CD4-positive, alpha-beta memory T cell (primary cell): ENCODE measurements at regions of chr4 and their contacts with region 1.

Region 1: GRCh38 chr4:103091601-103092223 is 7.9 kb downstream of the BDH2 start:
- DNase-seq: peak; percentile 51 to 66 (median 59)
- H3K4me3 ChIP-seq: no peak overlapping the region
- H3K4me3 Mint-ChIP-seq: no peak overlapping the region
- H3K27ac ChIP-seq: no peak overlapping the region
- H3K27ac Mint-ChIP-seq: peak overlapping the region in 3 of 7 donors; percentile 37 to 73 (median 60)
- H3K4me1 ChIP-seq: peaks cover 12% of the 10 kb centered on the region
- H3K4me1 Mint-ChIP-seq: peaks cover 6 to 20% (median 10%) of the 10 kb centered on the region in 4 donors
- H3K27me3 ChIP-seq: no peaks in the 10 kb centered on the region
- H3K27me3 Mint-ChIP-seq: no peaks in the 10 kb centered on the region

Region 2: DNA sequence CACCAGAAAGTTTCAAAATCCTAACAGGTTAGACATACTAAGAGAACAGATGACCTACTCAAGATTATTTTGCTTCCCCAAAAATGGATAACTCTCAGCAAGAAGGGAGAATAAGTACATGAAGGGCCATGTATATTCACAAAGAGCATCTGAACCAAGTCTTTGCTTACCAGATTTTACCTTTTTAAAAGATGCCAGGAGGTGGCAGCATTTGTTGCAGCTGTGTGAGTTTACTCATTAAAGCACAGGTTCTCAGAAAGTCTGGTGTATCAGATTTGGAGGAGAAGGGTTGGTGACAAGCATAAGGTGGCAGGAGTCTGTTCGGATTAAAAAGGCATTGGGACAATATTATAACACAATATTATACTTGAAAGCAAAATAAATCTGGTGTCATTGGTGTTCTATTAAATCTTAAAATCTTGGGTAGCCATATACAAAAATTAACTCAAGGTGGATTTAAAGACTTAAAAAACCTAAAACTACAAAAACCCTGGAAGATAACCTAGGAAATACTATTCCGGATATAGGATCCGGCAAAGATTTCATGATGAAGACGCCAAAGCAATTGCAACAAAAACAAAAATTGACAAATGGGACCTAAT is 641.9 kb before region 1 on chr4:
- CTCF ChIA-PET with region 1: interaction called, 7 read pairs
- POLR2A ChIA-PET with region 1: no interaction called
- intact Hi-C with region 1: loop called (anchors 1 kb)
- DNase-seq: peak; percentile 67 to 75 (median 68)
- H3K4me3 ChIP-seq: no peak overlapping the region
- H3K4me3 Mint-ChIP-seq: no peak overlapping the region
- H3K27ac ChIP-seq: no peak overlapping the region
- H3K27ac Mint-ChIP-seq: no peak overlapping the region
- H3K4me1 ChIP-seq: peaks cover 12% of the 10 kb centered on the region
- H3K4me1 Mint-ChIP-seq: peaks cover 5 to 21% (median 9%) of the 10 kb centered on the region in 4 donors
- H3K27me3 ChIP-seq: no peaks in the 10 kb centered on the region
- H3K27me3 Mint-ChIP-seq: no peaks in the 10 kb centered on the region

Region 3: GRCh38 chr4:103046416-103047290 is 45.1 kb before region 1 on chr4:
- CTCF ChIA-PET with region 1: interaction called, 62 read pairs
- POLR2A ChIA-PET with region 1: no interaction called
- intact Hi-C with region 1: loop called (anchors 1 kb)
- DNase-seq: peak; percentile 44 to 59 (median 48)
- H3K4me3 ChIP-seq: no peak overlapping the region
- H3K4me3 Mint-ChIP-seq: no peak overlapping the region
- H3K27ac ChIP-seq: no peak overlapping the region
- H3K27ac Mint-ChIP-seq: peak overlapping the region in 1 of 7 donors; percentile 27
- H3K4me1 ChIP-seq: no peaks in the 10 kb centered on the region
- H3K4me1 Mint-ChIP-seq: peaks cover 0 to 7% (median 0%) of the 10 kb centered on the region in 4 donors
- H3K27me3 ChIP-seq: no peaks in the 10 kb centered on the region
- H3K27me3 Mint-ChIP-seq: no peaks in the 10 kb centered on the region

Region 4: GRCh38 chr4:103075901-103076739 is 15.6 kb before region 1 on chr4:
- CTCF ChIA-PET with region 1: interaction called, 38 read pairs
- POLR2A ChIA-PET with region 1: interaction called, 6 read pairs
- intact Hi-C with region 1: loop called (anchors 1 kb)
- DNase-seq: peak; percentile 72 to 79 (median 76)
- H3K4me3 ChIP-seq: peak overlapping the region; percentile 26 to 72
- H3K4me3 Mint-ChIP-seq: peak overlapping the region; percentile 94 to 98 (median 98)
- H3K27ac ChIP-seq: peak overlapping the region; percentile 78
- H3K27ac Mint-ChIP-seq: peak overlapping the region; percentile 98 to 99 (median 99)
- H3K4me1 ChIP-seq: peaks cover 37% of the 10 kb centered on the region
- H3K4me1 Mint-ChIP-seq: peaks cover 24 to 58% (median 38%) of the 10 kb centered on the region in 4 donors
- H3K27me3 ChIP-seq: no peaks in the 10 kb centered on the region
- H3K27me3 Mint-ChIP-seq: no peaks in the 10 kb centered on the region